Activated T-helper 1 cell treated with anti-CD3 and anti-CD28 coated beads, Interleukin-12 subunit alpha, Interleukin-12 subunit beta, Interleukin-2, Interleukin-4 antibody, amounts not matched to agents 30 ng/mL and 10 ng/mL and 1 ng/mL, durations not matched to agents 14 hours and 24 hours and 36 hours (primary cell): ENCODE measurements at regions of chr11 and their contacts with region 1.

Region 1: DNA sequence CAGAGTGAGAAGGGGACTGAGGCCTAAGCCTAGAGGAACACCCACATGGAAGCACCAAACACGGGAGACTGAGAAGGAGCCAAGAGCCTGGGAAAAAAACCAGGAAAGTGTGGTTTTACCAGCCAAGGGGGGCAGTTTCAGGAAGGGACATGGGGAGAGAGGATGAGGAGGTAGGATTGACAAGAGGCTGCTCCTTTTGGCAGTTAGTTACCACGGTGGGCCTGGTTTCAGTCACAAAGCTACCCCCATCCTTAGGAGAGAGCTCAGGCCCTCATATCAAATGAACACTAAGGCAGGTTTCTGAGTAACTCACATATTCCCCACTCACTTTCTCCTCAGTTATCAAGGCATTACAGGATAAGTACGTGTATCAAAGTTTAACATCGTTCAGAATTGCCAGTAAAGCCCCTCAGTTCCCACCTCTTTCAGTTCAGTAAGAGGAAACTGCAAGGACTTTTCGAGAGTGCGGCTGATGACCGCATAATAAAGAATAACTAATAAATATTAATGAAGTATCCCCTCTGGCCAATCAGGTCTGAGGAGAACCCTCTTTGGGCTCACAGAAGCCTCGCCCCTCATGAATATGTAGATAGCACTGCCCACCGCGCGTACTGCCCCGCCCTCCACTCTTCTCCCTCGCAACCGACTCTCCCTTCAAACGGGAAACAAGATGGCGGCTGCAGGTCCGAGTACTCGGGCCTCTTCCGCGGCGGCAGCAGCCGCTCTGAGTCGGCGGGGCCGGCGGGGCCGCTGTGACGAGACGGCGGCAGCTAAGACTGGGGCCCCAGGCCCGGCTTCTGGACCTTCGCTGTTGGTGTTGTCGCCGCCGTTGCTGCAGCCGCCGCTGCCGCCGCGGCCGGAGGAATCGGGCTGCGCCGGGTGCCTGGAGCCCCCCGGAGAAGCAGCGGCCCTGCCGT is at the start of gene RNF169:
- DNase-seq: peak; percentile 85
- H3K4me3 Mint-ChIP-seq: peak within 1 kb of the TSS; percentile 98
- H3K27ac Mint-ChIP-seq: peak within 1 kb of the TSS; percentile 90
- H3K4me1 Mint-ChIP-seq: peaks cover 30% of the 10 kb centered on the region
- H3K27me3 Mint-ChIP-seq: peaks cover 4% of the 10 kb centered on the region
- total RNA-seq, gene RNF169: 14.8 and 15.3 TPM in 2 replicates

Region 2: DNA sequence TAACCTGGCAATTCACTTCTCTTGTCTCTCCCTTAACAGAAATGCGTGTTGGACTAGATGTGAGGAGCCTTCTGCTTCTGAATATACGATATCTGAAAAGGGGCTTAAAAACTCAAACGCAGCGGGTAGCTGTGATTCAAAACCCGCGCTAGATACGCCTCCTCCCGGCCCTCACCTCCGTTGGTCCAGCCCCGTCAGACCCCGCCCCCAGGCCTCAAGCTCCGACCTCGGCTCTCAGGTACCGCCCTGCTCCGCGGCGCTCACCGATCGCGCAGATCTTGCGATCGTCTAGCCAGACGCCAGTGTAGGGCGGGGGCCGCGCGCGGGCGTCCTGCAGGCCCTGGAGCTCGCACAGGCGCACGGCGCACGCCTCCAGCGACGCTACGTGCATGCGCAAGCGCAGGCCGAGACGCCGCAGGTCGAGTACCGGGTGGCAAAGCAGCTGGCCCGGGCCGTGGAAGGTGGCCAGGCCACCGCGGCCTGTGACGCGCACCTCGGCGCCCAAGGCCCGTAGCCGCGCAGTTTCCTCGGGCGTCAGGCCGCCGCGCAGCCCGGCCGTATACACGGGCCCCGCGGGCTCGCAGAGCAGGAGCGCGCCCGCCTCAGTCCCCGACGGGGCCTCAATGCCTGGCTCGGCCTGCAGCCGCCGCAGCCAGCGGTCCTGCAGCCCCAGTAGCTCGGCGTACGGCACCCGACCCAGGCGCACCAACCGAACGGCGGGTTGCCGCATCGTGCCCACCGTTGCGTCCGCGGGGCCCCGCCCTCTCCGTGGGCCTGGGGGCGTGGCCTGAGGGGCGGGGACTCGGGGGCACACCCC is 255.3 kb before region 1 on chr11 and contains the start of gene LIPT2:
- intact Hi-C with region 1: loop called (anchors 5 kb)
- DNase-seq: peak; percentile 96
- H3K4me3 Mint-ChIP-seq: peak within 1 kb of the TSS; percentile 86
- H3K27ac Mint-ChIP-seq: peak within 1 kb of the TSS; percentile 83
- H3K4me1 Mint-ChIP-seq: peaks cover 21% of the 10 kb centered on the region
- H3K27me3 Mint-ChIP-seq: peaks cover 8% of the 10 kb centered on the region
- total RNA-seq, gene LIPT2: 2.7 and 3.4 TPM in 2 replicates

Region 3: DNA sequence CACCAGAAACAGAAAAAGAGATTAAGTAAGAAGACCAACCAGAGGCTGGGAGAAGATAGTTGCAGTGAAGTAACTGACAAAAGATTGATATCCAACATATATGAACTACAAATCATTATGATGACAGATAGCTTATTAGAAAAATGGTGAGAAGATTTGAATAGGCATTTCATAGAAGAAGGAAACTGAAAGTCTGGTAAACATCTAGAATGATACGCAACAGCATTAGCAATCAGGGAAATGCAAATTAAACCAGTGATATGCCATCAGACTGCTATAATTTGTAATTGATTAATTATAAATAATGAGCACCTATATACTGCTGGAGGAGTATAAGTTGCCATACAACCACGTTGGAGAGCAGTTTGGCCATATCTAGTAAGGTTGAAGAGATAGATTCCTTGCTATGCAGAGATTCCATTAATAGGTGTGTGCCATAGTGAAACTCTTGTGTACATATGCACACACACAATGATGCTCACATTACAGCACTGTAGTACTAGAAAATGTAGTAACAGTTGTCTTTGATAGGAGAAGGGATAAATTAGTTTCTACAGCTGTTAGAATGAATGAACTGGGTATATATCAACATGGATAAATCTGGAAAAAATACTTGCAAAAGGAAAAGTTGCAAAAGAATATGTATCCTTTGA is 20.7 kb after region 1 on chr11:
- intact Hi-C with region 1: loop called (anchors 2 kb)
- DNase-seq: no peak
- H3K4me3 Mint-ChIP-seq: no peak overlapping the region
- H3K27ac Mint-ChIP-seq: no peak overlapping the region
- H3K4me1 Mint-ChIP-seq: peaks cover 26% of the 10 kb centered on the region
- H3K27me3 Mint-ChIP-seq: no peaks in the 10 kb centered on the region

Region 4: GRCh38 chr11:76235233-76236091 is 1487.0 kb after region 1 on chr11:
- intact Hi-C with region 1: loop called (anchors 10 kb)
- DNase-seq: peak; percentile 85
- H3K4me3 Mint-ChIP-seq: peak overlapping the region; percentile 92
- H3K27ac Mint-ChIP-seq: peak overlapping the region; percentile 84
- H3K4me1 Mint-ChIP-seq: peaks cover 50% of the 10 kb centered on the region
- H3K27me3 Mint-ChIP-seq: peaks cover 30% of the 10 kb centered on the region